ENCODE measurements at regions of chr4 and their contacts with region 1.

Region 1: GRCh38 chr4:142539796-142540482 is 306.2 kb downstream of the INPP4B start:
- DNase-seq: no peak
- ATAC-seq: no peak
- H3K4me3 ChIP-seq: no peak overlapping the region
- H3K4me3 Mint-ChIP-seq: peak overlapping the region in 5 of 10 donors; percentile 28 to 58 (median 32)
- H3K27ac ChIP-seq: no peak overlapping the region
- H3K27ac Mint-ChIP-seq: peak overlapping the region in 4 of 9 donors; percentile 19 to 48 (median 32)
- H3K4me1 ChIP-seq: peaks cover 0 to 11% of the 10 kb centered on the region in 2 donors
- H3K4me1 Mint-ChIP-seq: peaks cover 10 to 50% (median 39%) of the 10 kb centered on the region in 7 donors
- H3K27me3 ChIP-seq: no peaks in the 10 kb centered on the region
- H3K27me3 Mint-ChIP-seq: no peaks in the 10 kb centered on the region

Region 2: DNA sequence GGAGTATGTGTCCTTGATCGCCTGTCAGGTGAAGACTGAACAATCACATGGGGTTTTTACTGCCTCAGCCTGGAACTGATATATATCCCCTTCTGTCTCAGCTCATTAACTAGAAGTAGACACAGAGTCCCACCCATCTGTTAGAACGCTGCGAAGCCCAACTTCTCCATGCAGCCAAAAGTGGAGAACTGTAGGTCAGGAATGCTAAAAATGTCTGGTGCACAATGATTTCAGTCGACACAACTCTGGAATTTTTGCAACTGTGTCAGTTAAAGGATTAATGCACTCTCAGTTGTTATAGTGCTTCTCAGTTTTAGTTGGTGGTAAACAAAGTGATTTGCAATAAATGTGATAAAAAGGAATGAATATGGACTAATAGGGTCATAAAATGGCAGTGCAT is 18.9 kb after region 1 on chr4:
- CTCF ChIA-PET with region 1: no interaction called
- POLR2A ChIA-PET with region 1: interaction called, 5 read pairs
- intact Hi-C with region 1: loop called in 1 of 2 experiments (anchors 2 kb)
- DNase-seq: no peak
- ATAC-seq: no peak
- H3K4me3 ChIP-seq: no peak overlapping the region
- H3K4me3 Mint-ChIP-seq: peak overlapping the region in 3 of 10 donors; percentile 7 to 80 (median 29)
- H3K27ac ChIP-seq: peak overlapping the region; percentile 23
- H3K27ac Mint-ChIP-seq: peak overlapping the region in 4 of 9 donors; percentile 14 to 86 (median 28)
- H3K4me1 ChIP-seq: peaks cover 0 to 44% of the 10 kb centered on the region in 2 donors
- H3K4me1 Mint-ChIP-seq: peaks cover 22 to 88% (median 79%) of the 10 kb centered on the region in 7 donors
- H3K27me3 ChIP-seq: no peaks in the 10 kb centered on the region
- H3K27me3 Mint-ChIP-seq: no peaks in the 10 kb centered on the region

Region 3: DNA sequence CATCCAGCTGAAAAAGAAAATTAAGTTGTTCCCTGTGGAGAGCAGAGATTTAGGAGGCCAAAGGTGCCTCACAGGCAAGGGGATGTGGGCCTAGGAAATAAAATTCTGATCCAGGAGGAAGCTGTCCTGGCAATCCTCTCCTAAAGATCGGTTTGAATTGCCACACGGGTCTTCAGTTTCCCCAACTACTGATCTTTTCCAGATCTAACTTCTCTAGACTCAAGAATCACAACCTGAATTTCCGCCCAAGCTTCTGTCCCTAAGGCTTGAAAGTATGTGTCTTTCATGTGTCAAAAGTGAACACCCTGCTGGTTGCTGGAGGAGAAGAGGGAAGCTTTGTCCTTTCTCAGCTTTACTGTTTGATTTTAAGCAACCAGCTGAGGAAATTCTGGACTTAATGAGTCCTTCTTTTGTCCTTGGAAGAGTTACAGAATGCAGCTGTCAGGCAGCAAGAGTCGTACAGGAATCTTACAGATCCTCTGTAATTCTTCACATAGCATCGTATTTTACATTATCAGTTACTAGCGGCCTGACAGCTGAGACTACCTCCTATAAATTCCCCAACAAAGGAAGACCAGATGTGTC is 212.4 kb after region 1 on chr4:
- CTCF ChIA-PET with region 1: no interaction called
- POLR2A ChIA-PET with region 1: no interaction called
- intact Hi-C with region 1: no loop called
- DNase-seq: no peak
- ATAC-seq: no peak
- H3K4me3 ChIP-seq: no peak overlapping the region
- H3K4me3 Mint-ChIP-seq: no peak overlapping the region
- H3K27ac ChIP-seq: no peak overlapping the region
- H3K27ac Mint-ChIP-seq: no peak overlapping the region
- H3K4me1 ChIP-seq: no peaks in the 10 kb centered on the region
- H3K4me1 Mint-ChIP-seq: peaks cover 0 to 11% (median 0%) of the 10 kb centered on the region in 7 donors
- H3K27me3 ChIP-seq: no peaks in the 10 kb centered on the region
- H3K27me3 Mint-ChIP-seq: no peaks in the 10 kb centered on the region